Adrenal gland (tissue), 19 donors: ENCODE measurements at regions of chr16 and their contacts with region 1.

Region 1: DNA sequence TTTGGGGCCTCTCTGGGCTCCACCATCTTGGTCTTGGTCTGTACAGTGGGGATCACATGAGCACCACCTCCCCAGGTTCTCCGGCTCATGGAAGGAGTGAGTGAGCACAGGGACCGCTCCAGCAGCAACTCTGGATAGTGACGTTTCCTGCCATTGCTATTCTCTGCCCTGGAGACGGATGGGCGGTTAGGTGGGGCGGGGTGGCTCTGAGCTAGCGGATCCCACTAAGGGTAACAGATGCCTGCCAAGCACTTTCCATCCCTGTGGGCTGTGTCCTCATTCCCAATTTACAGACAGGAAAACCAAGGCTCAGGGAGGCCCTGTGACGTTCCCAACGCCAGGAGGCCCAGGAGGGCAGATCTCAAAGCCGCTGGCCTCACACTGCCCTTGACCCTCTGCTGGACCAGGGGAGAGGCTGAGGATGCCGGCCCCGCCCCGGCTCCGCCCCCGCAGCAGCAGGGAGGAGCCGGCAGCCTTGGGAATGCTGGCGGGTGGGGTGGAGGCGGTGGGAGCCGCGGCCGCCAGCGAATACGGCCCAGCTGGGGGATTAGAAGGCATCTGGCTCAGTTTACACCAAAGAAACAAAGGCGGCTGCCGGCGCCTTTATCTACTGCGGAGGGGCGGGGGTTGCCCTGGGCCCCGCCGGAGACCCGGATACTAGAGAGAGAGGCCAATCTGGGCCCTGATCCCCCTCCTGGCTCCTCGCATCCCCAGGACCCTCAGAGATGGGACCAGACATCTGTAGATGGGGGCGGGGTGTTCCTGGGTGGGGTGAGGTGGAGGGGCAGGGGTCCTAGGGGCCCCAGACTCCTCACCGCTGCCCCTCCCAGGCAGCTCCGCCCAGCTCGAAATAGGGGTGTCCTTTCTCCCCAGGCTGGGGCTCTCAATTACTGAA is 122.3 kb upstream of the CIBAR2 start:
- DNase-seq: peak; percentile 74 to 90 (median 89)
- H3K4me3 ChIP-seq: peak overlapping the region in 2 of 4 donors; percentile 13 to 62
- H3K27ac ChIP-seq: peak overlapping the region; percentile 32 to 85 (median 78)
- H3K4me1 ChIP-seq: peaks cover 28 to 53% of the 10 kb centered on the region in 2 donors
- H3K27me3 ChIP-seq: no peaks in the 10 kb centered on the region
- CTCF ChIP-seq: peak in 3 of 6 experiments; percentile 15 to 29 (median 28)
- POLR2A ChIP-seq: peak in 1 of 2 donors; percentile 55

Region 2: DNA sequence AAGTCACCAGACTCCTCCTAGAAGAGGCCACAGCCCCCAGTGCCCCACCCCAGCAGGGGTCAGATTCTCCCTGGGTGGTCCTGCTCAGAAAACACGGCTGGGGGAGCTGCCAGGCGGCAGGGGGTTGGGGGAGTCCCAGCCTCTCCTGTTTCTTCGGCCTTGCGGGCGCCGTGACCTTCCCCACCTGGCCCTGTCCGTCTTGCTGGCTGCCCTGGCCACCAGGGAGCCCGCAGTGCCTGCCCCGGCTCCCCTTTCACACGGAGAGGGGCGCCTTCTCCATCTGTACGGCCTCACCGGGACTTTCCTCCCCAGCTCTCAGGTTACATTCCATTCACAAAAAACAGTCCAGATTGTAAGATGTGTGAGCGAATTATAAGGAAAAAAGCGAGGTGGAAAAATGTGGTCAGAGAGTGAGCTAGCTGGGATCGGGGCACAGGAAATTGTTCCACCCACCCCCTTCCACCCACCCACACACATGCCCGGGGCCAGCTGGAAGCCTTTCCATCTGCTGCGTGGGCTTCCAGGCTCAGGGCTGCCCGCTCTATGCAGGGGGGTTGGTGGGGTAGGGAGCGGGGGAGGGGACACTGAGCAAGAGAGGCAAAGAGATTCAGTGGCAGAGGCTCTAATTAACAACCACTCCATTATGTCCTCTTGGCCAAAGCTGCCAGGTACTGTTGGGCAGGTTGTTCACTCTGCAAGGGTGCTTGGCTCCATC is 107.7 kb before region 1 on chr16:
- intact Hi-C with region 1: no loop called
- DNase-seq: peak in 2 of 7 donors; percentile 42 to 50
- H3K4me3 ChIP-seq: no peak overlapping the region
- H3K27ac ChIP-seq: peak overlapping the region in 2 of 5 donors; percentile 60 to 84
- H3K4me1 ChIP-seq: peaks cover 13 to 37% of the 10 kb centered on the region in 2 donors
- H3K27me3 ChIP-seq: no peaks in the 10 kb centered on the region
- CTCF ChIP-seq: no peak
- POLR2A ChIP-seq: no peak

Region 3: GRCh38 chr16:85172455-85173145 is 62.0 kb before region 1 on chr16:
- intact Hi-C with region 1: loop called in 1 of 2 experiments (anchors 10 kb)
- DNase-seq: peak in 1 of 7 donors; percentile 82
- H3K4me3 ChIP-seq: peak overlapping the region in 1 of 4 donors; percentile 42
- H3K27ac ChIP-seq: peak overlapping the region in 4 of 5 donors; percentile 67 to 89 (median 77)
- H3K4me1 ChIP-seq: peaks cover 57 to 83% of the 10 kb centered on the region in 2 donors
- H3K27me3 ChIP-seq: no peaks in the 10 kb centered on the region
- CTCF ChIP-seq: peak in 1 of 6 experiments; percentile 39
- POLR2A ChIP-seq: no peak

Region 4: DNA sequence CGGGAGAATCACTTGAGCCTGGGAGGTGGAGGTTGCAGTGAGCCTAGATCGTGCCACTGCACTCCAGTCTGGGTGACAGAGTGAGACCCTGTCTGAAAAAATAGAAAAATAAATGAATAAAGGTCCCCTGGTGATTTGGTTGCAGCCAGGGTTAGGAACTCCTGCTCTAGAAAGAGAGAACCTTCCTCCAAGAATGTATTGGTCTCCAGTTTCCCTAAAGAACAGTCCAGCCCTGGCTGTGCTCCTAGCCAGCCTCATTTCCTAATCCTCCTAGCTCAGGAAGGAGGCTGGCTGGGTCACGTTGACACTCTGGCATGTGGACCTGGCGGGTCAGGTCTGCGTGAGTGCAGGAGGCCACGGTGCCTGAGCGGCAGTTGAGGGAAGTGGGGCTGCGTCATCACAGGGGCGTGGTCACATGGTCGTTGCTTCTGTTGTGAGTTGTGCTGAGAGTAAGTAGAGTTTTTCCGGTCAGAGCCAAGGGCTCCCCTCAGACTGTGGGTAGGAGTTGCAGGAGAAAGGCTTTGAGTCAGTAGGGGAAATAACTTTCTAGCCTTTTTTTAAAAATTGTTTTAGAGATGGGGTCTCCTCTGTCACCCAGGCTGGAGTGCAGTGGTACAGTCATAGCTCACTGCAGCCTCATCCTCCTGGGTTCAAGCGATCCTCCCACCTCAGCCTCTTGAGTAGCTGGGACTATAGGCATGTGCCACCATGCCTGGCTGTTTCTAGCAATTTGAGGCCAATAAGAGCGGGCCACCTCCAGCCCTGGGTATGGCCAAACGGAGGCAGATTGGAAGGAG is 71.6 kb after region 1 on chr16:
- intact Hi-C with region 1: no loop called
- DNase-seq: peak; percentile 71 to 96 (median 92)
- H3K4me3 ChIP-seq: no peak overlapping the region
- H3K27ac ChIP-seq: peak overlapping the region in 4 of 5 donors; percentile 11 to 82 (median 62)
- H3K4me1 ChIP-seq: peaks cover 59 to 82% of the 10 kb centered on the region in 2 donors
- H3K27me3 ChIP-seq: no peaks in the 10 kb centered on the region
- CTCF ChIP-seq: no peak
- POLR2A ChIP-seq: peak in 1 of 2 donors; percentile 50